Dendritic cell treated with granulocyte-macrophage colony-stimulating factor and Interleukin-4, amounts not matched to agents 40 ng/mL and 50 ng/mL, for 4 days (primary cell): ENCODE measurements at regions of chr1 and their contacts with region 1.

Region 1: DNA sequence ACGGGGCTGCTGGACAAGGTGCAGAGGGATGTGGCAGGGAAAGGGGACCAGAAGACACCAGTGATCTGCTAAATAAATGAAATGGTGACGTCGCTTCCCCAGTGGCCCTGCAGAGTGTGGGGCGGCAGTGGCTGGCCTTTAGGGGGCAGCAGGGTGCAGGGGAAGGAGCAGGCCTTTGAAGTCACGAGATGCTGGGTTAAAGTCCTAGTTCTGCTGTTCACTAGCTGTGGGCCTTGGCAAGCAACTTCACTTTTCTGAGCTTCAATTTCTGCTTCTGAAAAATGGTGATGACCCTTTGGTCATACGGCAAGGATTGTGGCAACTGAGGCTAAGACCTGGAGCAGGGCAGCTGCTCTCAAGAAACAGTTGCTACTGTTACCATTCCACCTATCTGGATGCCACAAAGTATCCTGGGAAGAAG is 9.2 kb upstream of the GALE start:
- H3K4me3 Mint-ChIP-seq: no peak overlapping the region
- H3K27ac Mint-ChIP-seq: peak overlapping the region; percentile 55
- H3K4me1 Mint-ChIP-seq: peaks cover 70% of the 10 kb centered on the region
- H3K27me3 Mint-ChIP-seq: no peaks in the 10 kb centered on the region

Region 2: DNA sequence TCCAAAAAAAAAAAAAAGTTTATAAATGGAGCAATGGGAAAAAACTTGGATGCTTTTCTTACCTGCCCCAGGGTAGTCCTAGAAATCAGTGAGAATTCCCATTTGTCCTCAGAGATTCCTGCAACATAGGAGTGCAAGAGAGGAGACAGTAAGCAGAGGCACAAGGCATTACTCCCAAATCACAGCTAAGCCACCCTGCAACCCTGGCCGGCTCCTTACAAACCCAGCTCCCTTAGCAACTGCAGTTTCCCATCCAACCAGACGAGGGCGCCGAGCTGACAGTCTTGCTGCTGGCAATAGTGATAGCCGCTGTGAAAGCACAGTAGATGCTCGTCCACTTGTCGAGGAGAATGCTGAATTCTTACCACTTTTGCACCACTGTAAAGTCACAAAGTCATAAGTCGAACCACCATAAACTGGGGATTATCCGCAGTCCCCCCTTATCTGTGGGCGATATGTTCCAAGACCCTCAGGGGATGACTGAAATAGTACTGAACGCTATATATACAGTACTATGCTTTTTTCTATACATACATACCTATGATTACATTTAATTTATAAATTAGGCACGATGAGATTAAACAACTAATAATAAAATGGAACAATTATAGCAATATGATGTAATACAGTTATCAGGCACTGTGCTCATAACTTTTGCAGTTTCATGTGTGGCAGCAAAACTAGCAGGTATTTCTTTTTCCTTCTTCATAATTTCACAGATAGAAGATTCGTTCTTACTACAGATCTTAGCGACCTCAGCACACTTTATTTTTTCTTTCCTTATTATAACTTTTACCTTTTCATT is 37.5 kb before region 1 on chr1:
- intact Hi-C with region 1: loop called (anchors 5 kb)
- H3K4me3 Mint-ChIP-seq: no peak overlapping the region
- H3K27ac Mint-ChIP-seq: no peak overlapping the region
- H3K4me1 Mint-ChIP-seq: no peaks in the 10 kb centered on the region
- H3K27me3 Mint-ChIP-seq: no peaks in the 10 kb centered on the region

Region 3: GRCh38 chr1:23825076-23825761 is 15.5 kb after region 1 on chr1 and contains the start of gene HMGCL:
- intact Hi-C with region 1: loop called (anchors 2 kb)
- H3K4me3 Mint-ChIP-seq: peak within 1 kb of the TSS; percentile 91
- H3K27ac Mint-ChIP-seq: peak within 1 kb of the TSS; percentile 99
- H3K4me1 Mint-ChIP-seq: peaks cover 38% of the 10 kb centered on the region
- H3K27me3 Mint-ChIP-seq: no peaks in the 10 kb centered on the region

Region 4: GRCh38 chr1:23838401-23838866 is 28.7 kb after region 1 on chr1:
- intact Hi-C with region 1: loop called (anchors 2 kb)
- H3K4me3 Mint-ChIP-seq: peak overlapping the region; percentile 69
- H3K27ac Mint-ChIP-seq: peak overlapping the region; percentile 58
- H3K4me1 Mint-ChIP-seq: peaks cover 23% of the 10 kb centered on the region
- H3K27me3 Mint-ChIP-seq: peaks cover 4% of the 10 kb centered on the region

Region 5: DNA sequence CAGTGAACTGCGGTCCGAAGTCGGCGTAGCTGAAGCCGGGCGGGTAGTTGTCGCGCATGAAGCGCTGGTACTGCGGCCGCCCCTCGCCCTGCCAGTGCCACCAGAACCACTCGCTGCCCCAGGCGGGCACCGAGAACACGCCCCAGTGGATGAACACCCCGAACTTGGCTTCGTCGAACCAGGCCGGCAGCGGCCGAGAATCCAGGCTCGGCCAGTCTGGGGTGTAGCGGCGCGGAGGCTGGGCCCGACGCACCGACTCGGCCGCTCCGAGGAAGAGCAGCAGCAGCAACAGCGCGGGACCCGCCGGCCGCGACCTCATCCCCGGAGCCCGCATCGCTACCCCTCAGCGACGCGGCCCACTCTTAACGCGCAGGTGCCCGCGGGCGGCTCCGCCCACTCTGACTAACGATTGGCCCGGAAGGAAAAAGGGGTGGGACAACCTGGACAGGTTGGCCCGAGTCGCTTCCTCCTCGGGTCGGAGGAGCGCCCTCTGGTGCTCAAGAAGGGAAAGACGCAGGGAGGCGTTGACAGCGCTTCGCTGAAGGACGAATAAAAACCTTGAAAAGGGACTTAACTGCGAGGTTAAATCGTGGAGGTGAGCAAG is 58.3 kb after region 1 on chr1 and contains the start of gene FUCA1:
- intact Hi-C with region 1: loop called (anchors 1 kb)
- H3K4me3 Mint-ChIP-seq: peak within 1 kb of the TSS; percentile 85
- H3K27ac Mint-ChIP-seq: peak within 1 kb of the TSS; percentile 55
- H3K4me1 Mint-ChIP-seq: peaks cover 52% of the 10 kb centered on the region
- H3K27me3 Mint-ChIP-seq: no peaks in the 10 kb centered on the region

Region 6: GRCh38 chr1:23916209-23917131 is 106.7 kb after region 1 on chr1:
- intact Hi-C with region 1: loop called (anchors 1 kb)
- H3K4me3 Mint-ChIP-seq: no peak overlapping the region
- H3K27ac Mint-ChIP-seq: peak overlapping the region; percentile 71
- H3K4me1 Mint-ChIP-seq: peaks cover 59% of the 10 kb centered on the region
- H3K27me3 Mint-ChIP-seq: no peaks in the 10 kb centered on the region